Activated CD4-positive, alpha-beta T cell treated with anti-CD3 and anti-CD28 coated beads, Interleukin-2, amount 10 ng/mL, durations not matched to agents 24 days and 14 days (primary cell): ENCODE measurements at regions of chr16 and their contacts with region 1.

Region 1: DNA sequence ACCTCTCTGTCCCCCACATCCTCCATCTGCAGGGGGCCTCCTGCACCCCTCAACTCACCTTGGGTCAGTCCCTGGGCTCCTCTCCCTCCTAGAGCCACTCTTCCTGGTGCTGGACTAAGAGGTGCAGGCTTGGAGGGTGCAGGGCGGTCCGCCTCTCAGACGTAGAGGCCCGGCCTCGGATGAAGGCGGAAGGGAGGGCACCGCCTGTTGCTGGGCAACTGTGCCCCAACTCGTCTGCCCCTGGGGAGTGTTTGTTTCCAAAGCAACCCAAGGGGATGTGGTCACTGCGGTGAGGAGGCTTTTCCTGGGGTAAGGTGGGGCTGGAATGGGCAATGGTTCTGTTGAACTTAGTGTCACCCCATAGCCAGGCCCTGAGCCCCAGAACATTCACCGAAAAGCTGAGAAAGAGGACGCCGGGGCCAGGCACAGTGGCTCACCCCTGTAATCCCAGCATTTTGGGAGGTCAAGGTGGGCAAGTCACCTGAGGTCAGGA is at the start of gene C16orf54:
- DNase-seq: peak; percentile 98
- H3K4me3 Mint-ChIP-seq: peak within 1 kb of the TSS; percentile 93
- H3K27ac Mint-ChIP-seq: peak within 1 kb of the TSS; percentile 94
- H3K4me1 Mint-ChIP-seq: peaks cover 55% of the 10 kb centered on the region
- H3K27me3 Mint-ChIP-seq: no peaks in the 10 kb centered on the region
- total RNA-seq, gene C16orf54: 17.0 and 17.8 TPM in 2 replicates

Region 2: DNA sequence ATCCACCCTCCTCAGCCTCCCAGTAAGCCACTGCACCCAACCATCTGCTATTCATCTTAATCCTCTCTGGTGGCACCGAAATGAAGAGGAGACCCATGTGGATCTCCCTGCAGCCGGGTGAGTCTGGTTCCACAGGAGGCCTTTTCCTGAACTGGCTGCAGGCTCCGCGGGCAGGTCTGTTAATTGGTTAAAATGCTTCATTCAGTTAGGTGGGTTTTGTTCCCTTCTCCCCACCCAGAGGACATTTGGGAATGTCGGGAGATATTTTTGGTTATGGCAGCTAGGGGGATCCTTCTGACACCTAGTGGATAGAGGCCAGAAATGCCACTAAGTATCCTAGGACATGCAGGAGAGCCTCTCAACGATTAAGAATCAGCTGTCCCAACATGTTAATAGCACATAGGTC is 16.8 kb before region 1 on chr16:
- intact Hi-C with region 1: loop called (anchors 1 kb)
- DNase-seq: no peak
- H3K4me3 Mint-ChIP-seq: no peak overlapping the region
- H3K27ac Mint-ChIP-seq: no peak overlapping the region
- H3K4me1 Mint-ChIP-seq: peaks cover 26% of the 10 kb centered on the region
- H3K27me3 Mint-ChIP-seq: peaks cover 18% of the 10 kb centered on the region

Region 3: DNA sequence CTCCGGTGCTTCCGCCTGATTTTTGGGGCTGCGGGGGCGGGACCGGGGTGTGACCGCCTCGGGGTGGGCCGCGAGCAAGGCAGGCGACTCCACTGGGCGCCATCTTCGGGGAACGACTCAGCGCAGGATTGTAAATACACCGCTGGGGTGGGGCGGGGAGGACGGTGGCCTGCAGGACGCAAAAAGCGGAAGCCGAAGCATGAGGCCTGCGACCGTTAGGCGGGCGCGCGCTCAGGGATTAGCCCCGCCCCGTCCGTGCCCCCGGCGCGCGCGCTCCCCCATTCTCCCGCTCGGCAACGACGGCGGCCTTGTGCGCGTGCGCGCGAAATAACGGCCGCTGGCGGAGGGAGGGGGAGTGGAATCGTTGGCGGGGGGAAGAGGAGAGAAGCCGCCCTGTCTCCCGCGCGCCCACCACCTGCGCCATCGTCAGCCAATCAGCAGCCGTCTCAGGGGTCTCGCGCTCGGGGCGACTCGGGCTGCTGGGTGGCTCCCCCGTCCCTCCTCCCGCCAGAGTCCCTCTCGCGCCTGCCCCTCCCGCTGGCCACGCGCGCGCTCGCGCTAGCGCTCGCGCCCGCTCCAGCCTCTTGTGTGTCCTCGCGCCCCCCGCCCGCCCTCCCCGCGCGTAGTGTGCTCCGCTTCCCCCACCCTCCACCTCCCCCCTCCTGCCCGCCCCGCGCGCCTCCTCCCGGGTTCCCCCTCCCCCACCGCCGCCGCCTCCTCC is 59.6 kb after region 1 on chr16:
- intact Hi-C with region 1: no loop called
- DNase-seq: peak; percentile 99
- H3K4me3 Mint-ChIP-seq: peak overlapping the region; percentile 96
- H3K27ac Mint-ChIP-seq: peak overlapping the region; percentile 99
- H3K4me1 Mint-ChIP-seq: peaks cover 42% of the 10 kb centered on the region
- H3K27me3 Mint-ChIP-seq: no peaks in the 10 kb centered on the region

Region 4: DNA sequence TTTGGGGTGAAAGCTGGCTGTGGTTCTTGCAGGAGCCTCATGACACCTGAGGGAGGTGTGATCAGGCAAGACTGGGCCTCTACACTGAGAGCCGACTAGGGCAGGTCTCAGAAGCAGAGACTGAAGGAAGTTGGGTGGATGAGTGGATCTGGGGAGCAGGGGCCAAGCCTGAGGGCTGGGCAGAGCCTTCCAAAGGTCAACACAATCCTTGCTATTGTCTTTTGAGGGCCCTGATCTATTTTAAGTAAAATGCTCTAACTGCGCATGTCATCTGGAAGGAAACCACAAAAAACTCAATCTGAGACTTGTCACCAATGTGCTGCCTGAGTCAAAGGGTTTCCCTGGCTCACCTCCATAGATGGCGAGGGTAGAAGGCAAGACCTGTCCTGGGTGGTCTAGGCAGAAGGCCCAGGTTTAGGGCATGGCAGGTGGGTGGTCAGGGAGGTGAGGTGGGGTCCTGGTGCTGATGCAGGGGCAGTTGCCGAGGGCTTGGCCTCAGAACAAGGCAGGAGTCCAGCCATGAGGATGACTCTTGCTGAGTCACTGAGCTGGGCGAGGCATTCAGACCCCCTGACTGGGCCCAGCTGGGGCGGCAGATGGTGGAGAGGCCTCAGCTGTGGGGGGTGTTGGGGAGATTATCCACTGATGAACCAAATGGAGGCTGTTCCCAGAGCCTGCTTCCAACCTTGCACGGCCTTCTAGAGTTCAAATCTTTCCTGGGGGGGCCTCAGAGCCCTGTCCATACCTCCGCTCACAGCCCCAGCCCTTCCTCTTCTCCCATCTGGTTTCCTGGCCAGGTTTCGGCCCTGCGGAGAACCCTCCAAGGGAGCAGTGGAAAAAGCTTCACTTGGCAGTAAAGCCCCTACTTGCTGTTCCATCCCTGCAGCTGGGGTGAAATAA is 79.5 kb after region 1 on chr16:
- intact Hi-C with region 1: loop called (anchors 5 kb)
- DNase-seq: peak; percentile 85
- H3K4me3 Mint-ChIP-seq: peak overlapping the region; percentile 69
- H3K27ac Mint-ChIP-seq: peak overlapping the region; percentile 85
- H3K4me1 Mint-ChIP-seq: peaks cover 50% of the 10 kb centered on the region
- H3K27me3 Mint-ChIP-seq: no peaks in the 10 kb centered on the region

Region 5: DNA sequence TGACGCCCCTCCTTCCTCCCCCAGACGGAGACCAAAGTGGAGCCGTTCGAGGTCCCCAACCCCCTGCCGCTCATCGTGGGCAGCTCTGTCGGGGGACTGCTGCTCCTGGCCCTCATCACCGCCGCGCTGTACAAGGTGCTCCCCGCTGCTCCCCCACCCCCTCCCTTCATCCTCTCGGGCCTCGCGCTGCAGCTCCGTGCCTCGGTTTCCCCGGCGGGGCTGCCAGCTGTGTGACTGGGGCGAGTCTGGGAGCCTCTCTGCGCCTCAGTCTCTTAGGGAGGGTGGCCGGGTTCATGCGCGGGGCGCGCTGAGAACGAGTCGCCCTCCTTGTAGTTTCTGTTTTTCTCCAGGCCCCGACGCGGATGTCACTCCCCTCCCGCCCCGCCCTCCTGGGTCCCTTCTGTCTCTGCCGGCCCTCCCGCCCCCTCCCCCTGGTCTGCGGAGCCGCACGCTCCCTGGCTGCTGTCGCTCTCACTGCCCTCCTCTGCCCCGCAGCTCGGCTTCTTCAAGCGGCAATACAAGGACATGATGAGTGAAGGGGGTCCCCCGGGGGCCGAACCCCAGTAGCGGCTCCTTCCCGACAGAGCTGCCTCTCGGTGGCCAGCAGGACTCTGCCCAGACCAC is 1585.4 kb after region 1 on chr16:
- intact Hi-C with region 1: no loop called
- DNase-seq: peak; percentile 82
- H3K4me3 Mint-ChIP-seq: peak overlapping the region; percentile 73
- H3K27ac Mint-ChIP-seq: no peak overlapping the region
- H3K4me1 Mint-ChIP-seq: peaks cover 21% of the 10 kb centered on the region
- H3K27me3 Mint-ChIP-seq: peaks cover 10% of the 10 kb centered on the region